Heart right ventricle (tissue), 16 donors: ENCODE measurements at regions of chr1 and their contacts with region 1.

Region 1: DNA sequence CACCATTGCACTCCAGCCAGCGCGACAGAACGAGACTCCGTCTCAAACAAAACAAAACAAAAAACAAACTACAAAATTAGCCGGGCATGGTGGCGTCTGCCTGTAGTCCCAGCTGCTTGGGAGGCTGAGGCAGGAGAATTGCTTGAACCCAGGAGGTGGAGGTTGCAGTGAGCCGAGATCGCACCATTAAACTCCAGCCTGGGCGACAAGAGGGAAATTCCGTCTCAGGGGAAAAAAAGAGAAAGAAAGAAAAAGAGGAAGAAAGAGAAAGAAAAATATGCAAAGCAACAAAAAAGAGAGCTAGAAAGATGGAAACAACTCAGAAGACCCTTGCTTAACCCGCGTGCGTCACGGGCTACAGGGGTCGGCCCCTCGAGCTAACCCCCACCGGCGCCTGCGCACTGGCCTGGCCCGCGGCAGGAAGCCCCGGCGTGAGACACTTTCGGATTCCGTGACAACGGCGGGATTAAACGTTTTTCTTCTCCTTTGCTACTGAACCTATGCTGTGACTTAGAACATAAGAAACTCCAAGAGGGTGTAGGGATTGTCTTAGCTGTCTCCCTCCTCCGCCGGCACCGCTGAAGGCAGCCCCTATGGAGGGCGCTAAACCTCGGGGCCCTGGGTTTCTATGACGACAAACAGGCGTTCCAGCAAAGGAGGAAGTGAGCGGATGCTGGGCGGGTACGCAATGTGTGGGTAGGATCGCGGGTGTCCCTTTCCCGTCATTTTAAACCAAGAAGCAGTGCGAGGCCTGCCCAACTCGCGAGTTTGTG is at the start of gene AXDND1:
- DNase-seq: peak; percentile 86 to 90
- ATAC-seq: peak; percentile 95 to 98 (median 97)
- H3K4me3 ChIP-seq: peak within 1 kb of the TSS; percentile 60 to 79 (median 70)
- H3K27ac ChIP-seq: peak within 1 kb of the TSS; percentile 83 to 96 (median 88)
- H3K4me1 ChIP-seq: peaks cover 0 to 12% (median 0%) of the 10 kb centered on the region in 9 donors
- H3K27me3 ChIP-seq: no peaks in the 10 kb centered on the region
- CTCF ChIP-seq: peak in 3 of 9 donors; percentile 30 to 60 (median 32)
- total RNA-seq, gene AXDND1: 0.12 to 0.17 (median 0.17) TPM in 3 of 10 donors, not detected in the others

Region 2: GRCh38 chr1:179081687-179082332 is 283.7 kb before region 1 on chr1 and contains the start of gene TOR3A:
- intact Hi-C with region 1: loop called (anchors 1 to 10 kb)
- DNase-seq: peak; percentile 92 to 93
- ATAC-seq: peak; percentile 97 to 99 (median 98)
- H3K4me3 ChIP-seq: peak within 1 kb of the TSS; percentile 80 to 99 (median 94)
- H3K27ac ChIP-seq: peak within 1 kb of the TSS; percentile 75 to 95 (median 92)
- H3K4me1 ChIP-seq: peaks cover 3 to 28% (median 17%) of the 10 kb centered on the region in 9 donors
- H3K27me3 ChIP-seq: no peaks in the 10 kb centered on the region
- CTCF ChIP-seq: no peak
- total RNA-seq, gene TOR3A: 6.8 to 18.0 (median 10.9) TPM

Region 3: DNA sequence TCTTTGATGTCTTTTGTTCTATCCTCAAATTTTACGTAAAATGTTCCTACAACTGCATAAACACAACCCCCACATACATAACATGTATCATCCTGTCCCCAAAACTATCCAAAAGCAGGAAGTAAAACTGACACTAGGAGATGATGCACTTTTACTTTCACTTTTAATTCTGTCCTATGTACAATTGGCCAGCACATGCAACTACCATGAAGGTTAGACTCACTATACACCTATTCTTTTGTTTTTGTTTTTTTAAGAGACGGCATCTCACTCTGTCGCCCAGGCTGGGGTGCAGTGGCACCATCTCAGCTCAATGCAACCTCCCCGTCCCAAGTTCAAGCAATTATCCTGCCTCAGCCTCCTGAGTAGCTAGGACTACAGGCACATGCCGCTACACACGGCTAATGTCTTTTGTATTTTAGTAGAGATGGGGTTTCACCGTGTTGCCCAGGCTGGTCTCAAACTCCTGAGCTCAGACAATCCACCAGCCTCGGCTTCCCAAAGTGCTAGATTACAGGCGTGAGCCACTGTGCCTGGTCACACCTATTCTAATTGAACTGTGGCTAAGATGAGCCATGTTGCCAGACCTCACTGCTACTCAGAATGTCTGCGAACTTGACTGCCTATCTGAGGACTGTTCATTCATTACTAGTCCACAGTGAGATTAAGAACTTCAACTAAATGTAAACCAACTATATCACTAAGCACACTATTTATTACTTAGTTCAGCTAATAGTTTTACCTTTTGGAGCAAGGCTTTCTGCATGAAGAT is 235.6 kb before region 1 on chr1:
- intact Hi-C with region 1: no loop called
- DNase-seq: no peak
- ATAC-seq: peak in 7 of 8 donors; percentile 71 to 89 (median 80)
- H3K4me3 ChIP-seq: peak overlapping the region in 9 of 10 donors; percentile 3 to 49 (median 36)
- H3K27ac ChIP-seq: peak overlapping the region in 9 of 10 donors; percentile 34 to 86 (median 62)
- H3K4me1 ChIP-seq: peaks cover 0 to 57% (median 20%) of the 10 kb centered on the region in 9 donors
- H3K27me3 ChIP-seq: no peaks in the 10 kb centered on the region
- CTCF ChIP-seq: no peak

Region 4: GRCh38 chr1:179190861-179191260 is 174.6 kb before region 1 on chr1:
- intact Hi-C with region 1: loop called in 1 of 10 experiments (anchors 10 kb)
- DNase-seq: peak in 1 of 2 donors; percentile 67
- ATAC-seq: peak; percentile 43 to 95 (median 86)
- H3K4me3 ChIP-seq: no peak overlapping the region
- H3K27ac ChIP-seq: peak overlapping the region; percentile 37 to 91 (median 76)
- H3K4me1 ChIP-seq: peaks cover 0 to 26% (median 8%) of the 10 kb centered on the region in 9 donors
- H3K27me3 ChIP-seq: no peaks in the 10 kb centered on the region
- CTCF ChIP-seq: no peak

Region 5: GRCh38 chr1:179251675-179252074 is 113.8 kb before region 1 on chr1:
- intact Hi-C with region 1: loop called in 5 of 10 experiments (anchors 5 to 10 kb)
- DNase-seq: no peak
- ATAC-seq: peak in 2 of 8 donors; percentile 38 to 72
- H3K4me3 ChIP-seq: no peak overlapping the region
- H3K27ac ChIP-seq: no peak overlapping the region
- H3K4me1 ChIP-seq: peaks cover 0 to 4% (median 0%) of the 10 kb centered on the region in 9 donors
- H3K27me3 ChIP-seq: no peaks in the 10 kb centered on the region
- CTCF ChIP-seq: peak in 6 of 9 donors; percentile 34 to 56 (median 48)

Region 6: GRCh38 chr1:179318491-179318890 is 47.0 kb before region 1 on chr1:
- intact Hi-C with region 1: no loop called
- DNase-seq: no peak
- ATAC-seq: no peak
- H3K4me3 ChIP-seq: no peak overlapping the region
- H3K27ac ChIP-seq: no peak overlapping the region
- H3K4me1 ChIP-seq: peaks cover 0 to 12% (median 0%) of the 10 kb centered on the region in 9 donors
- H3K27me3 ChIP-seq: no peaks in the 10 kb centered on the region
- CTCF ChIP-seq: no peak

Region 7: DNA sequence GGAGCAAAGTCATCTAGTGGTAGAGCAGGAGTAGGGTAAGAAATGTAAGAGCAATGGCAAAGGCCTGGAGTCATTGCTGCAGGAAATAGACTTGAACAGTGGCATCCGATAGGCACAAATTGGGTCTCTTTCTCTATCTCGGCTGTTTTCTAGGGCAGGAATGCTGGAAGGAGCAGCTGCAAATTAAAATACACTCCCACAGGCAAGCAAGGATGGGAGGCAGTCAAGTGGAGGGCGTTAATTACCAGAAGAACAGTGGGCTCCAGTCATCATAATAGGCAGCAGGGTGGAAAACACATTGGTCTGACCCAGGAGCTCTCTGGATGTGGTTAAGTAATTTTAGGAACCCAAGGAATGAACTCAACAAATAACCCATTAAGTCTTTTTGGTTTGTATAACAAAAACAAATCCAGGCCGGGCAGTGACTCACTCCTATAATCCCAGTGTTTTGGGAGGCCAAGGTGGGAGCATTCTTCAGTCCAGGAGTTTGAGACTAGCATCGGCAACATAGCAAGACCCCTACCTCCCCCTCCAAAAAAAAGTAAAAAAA is 218.3 kb after region 1 on chr1:
- intact Hi-C with region 1: no loop called
- DNase-seq: no peak
- ATAC-seq: no peak
- H3K4me3 ChIP-seq: no peak overlapping the region
- H3K27ac ChIP-seq: no peak overlapping the region
- H3K4me1 ChIP-seq: peaks cover 0 to 12% (median 4%) of the 10 kb centered on the region in 9 donors
- H3K27me3 ChIP-seq: peaks cover 0 to 53% (median 39%) of the 10 kb centered on the region in 7 donors
- CTCF ChIP-seq: no peak